CD8-positive, alpha-beta T cell (primary cell): ENCODE measurements at regions of chr18 and their contacts with region 1.

Region 1: GRCh38 chr18:23131693-23132319 is 3.5 kb upstream of the CABLES1 start:
- DNase-seq: peak in 8 of 9 experiments; percentile 47 to 84 (median 62)
- ATAC-seq: peak; percentile 54
- H3K4me3 ChIP-seq: no peak overlapping the region
- H3K4me3 Mint-ChIP-seq: no peak overlapping the region
- H3K27ac ChIP-seq: no peak overlapping the region
- H3K27ac Mint-ChIP-seq: no peak overlapping the region
- H3K4me1 ChIP-seq: peaks cover 11% of the 10 kb centered on the region
- H3K4me1 Mint-ChIP-seq: peaks cover 15% of the 10 kb centered on the region
- H3K27me3 ChIP-seq: peaks cover 16 to 17% of the 10 kb centered on the region in 2 experiments
- H3K27me3 Mint-ChIP-seq: peaks cover 38% of the 10 kb centered on the region
- CTCF ChIP-seq: peak; percentile 90

Region 2: GRCh38 chr18:21557607-21558253 is 1574.1 kb before region 1 on chr18:
- CTCF ChIA-PET with region 1: no interaction called
- POLR2A ChIA-PET with region 1: no interaction called
- intact Hi-C with region 1: no loop called
- DNase-seq: no peak
- ATAC-seq: no peak
- H3K4me3 ChIP-seq: no peak overlapping the region
- H3K4me3 Mint-ChIP-seq: no peak overlapping the region
- H3K27ac ChIP-seq: no peak overlapping the region
- H3K27ac Mint-ChIP-seq: no peak overlapping the region
- H3K4me1 ChIP-seq: no peaks in the 10 kb centered on the region
- H3K4me1 Mint-ChIP-seq: no peaks in the 10 kb centered on the region
- H3K27me3 ChIP-seq: no peaks in the 10 kb centered on the region
- H3K27me3 Mint-ChIP-seq: no peaks in the 10 kb centered on the region
- CTCF ChIP-seq: no peak

Region 3: DNA sequence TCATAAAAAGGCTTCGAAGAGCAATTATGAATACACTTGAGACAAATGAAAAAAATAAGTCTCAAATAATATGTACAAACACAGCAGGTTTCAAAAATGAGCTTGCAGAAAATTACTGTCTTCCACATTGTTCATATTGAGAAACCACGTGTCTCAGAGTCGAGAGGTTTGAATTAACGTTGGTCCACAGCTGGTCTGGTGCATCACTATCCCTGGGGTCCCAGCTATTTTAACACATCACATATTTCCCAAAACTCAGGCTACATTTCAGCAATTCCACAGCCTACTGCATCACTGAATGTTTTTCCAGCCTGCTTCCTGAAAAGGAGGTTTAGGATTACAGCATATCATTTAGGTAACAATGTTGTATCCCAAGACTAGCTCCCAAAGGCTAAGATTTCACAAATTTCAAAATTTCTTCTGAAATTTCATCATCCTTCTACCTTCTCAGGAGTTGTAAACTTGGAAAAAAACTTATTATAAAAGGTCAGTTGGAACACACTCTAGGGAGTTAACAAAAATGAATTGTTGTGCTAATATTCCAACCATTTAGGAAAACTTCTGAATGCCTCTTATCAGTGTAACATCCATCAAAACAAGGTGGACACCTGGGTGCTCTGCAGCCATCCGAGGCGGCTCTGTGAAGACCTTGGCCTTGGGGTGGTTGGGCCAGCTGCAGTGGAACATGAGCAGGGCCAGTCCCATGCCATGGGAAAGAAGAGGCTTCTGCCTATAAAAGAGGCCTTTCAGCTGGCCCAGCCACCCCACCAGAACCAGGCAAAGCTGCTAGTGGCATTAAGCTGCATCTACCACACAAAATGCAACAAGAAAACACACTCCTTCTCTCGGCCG is 396.8 kb before region 1 on chr18:
- CTCF ChIA-PET with region 1: no interaction called
- POLR2A ChIA-PET with region 1: no interaction called
- intact Hi-C with region 1: no loop called
- DNase-seq: no peak
- ATAC-seq: no peak
- H3K4me3 ChIP-seq: no peak overlapping the region
- H3K4me3 Mint-ChIP-seq: no peak overlapping the region
- H3K27ac ChIP-seq: no peak overlapping the region
- H3K27ac Mint-ChIP-seq: no peak overlapping the region
- H3K4me1 ChIP-seq: no peaks in the 10 kb centered on the region
- H3K4me1 Mint-ChIP-seq: no peaks in the 10 kb centered on the region
- H3K27me3 ChIP-seq: no peaks in the 10 kb centered on the region
- H3K27me3 Mint-ChIP-seq: peaks cover 3% of the 10 kb centered on the region
- CTCF ChIP-seq: no peak

Region 4: DNA sequence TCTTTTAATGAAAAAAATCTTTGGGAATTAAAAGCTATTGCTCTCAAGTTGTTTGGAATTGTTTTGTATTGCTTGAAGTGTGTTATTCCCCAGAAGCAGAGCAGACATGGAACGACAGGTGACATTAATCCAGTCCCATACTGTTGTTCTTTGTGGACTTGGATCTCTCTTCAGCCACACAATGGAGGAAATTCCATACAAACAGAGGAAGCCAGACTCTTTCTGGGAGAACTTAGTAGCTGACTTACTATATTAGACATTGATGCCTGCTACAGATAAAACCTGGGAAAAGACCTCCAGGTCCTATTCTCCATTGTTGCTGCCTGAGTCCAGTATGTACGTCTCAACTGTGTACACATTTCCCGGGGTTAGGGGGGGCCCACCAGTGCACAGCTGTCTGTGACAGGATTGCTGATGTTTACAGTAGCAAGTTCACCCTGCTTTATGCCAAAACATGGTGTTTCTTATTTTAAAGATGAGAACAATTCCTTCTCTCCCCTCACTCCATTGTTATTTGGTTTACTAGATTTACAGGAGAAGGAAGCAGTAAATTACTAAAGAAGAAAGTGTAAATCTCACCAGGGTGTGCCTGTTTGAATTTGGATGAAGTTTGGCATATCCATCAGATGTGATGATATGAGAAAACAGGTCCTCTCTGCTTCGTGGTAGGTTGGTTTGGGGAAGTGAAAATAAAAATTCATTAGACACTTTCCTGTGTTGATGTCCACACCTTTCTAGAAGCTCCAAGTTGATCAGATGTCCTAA is 341.1 kb before region 1 on chr18:
- CTCF ChIA-PET with region 1: no interaction called
- POLR2A ChIA-PET with region 1: no interaction called
- intact Hi-C with region 1: loop called in 1 of 2 experiments (anchors 10 kb)
- DNase-seq: no peak
- ATAC-seq: no peak
- H3K4me3 ChIP-seq: no peak overlapping the region
- H3K4me3 Mint-ChIP-seq: no peak overlapping the region
- H3K27ac ChIP-seq: no peak overlapping the region
- H3K27ac Mint-ChIP-seq: no peak overlapping the region
- H3K4me1 ChIP-seq: no peaks in the 10 kb centered on the region
- H3K4me1 Mint-ChIP-seq: no peaks in the 10 kb centered on the region
- H3K27me3 ChIP-seq: peaks cover 0 to 2% of the 10 kb centered on the region in 2 experiments
- H3K27me3 Mint-ChIP-seq: peaks cover 14% of the 10 kb centered on the region
- CTCF ChIP-seq: no peak

Region 5: DNA sequence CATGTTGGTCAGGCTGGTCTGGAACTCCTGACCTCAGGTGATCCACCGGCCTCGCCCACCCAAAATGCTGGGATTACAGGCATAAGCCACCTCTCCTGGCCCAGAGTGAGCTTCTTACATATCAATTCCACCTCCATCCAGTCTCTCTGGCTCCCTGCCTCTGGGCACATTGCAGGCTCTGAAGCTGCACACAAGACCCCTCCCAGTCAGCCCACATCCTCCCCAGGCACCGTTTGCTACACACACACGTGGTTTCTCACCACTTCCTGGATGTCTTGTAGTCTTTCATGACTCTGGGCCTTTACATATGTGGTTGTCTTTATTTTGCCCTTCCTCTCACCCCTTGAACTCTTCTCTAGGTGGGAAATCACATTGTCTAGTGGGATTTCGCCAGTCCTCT is 60.5 kb before region 1 on chr18:
- CTCF ChIA-PET with region 1: interaction called, 3 read pairs
- POLR2A ChIA-PET with region 1: no interaction called
- intact Hi-C with region 1: loop called (anchors 2 to 5 kb)
- DNase-seq: peak; percentile 63 to 95 (median 86)
- ATAC-seq: peak; percentile 92
- H3K4me3 ChIP-seq: peak overlapping the region in 1 of 2 experiments; percentile 8
- H3K4me3 Mint-ChIP-seq: peak overlapping the region; percentile 71
- H3K27ac ChIP-seq: peak overlapping the region in 1 of 2 experiments; percentile 37
- H3K27ac Mint-ChIP-seq: peak overlapping the region; percentile 85
- H3K4me1 ChIP-seq: peaks cover 52% of the 10 kb centered on the region
- H3K4me1 Mint-ChIP-seq: peaks cover 66% of the 10 kb centered on the region
- H3K27me3 ChIP-seq: no peaks in the 10 kb centered on the region
- H3K27me3 Mint-ChIP-seq: no peaks in the 10 kb centered on the region
- CTCF ChIP-seq: no peak

Region 6: GRCh38 chr18:23356915-23357601 is 225.3 kb after region 1 on chr18:
- CTCF ChIA-PET with region 1: interaction called, 28 read pairs
- POLR2A ChIA-PET with region 1: no interaction called
- intact Hi-C with region 1: loop called (anchors 1 kb)
- DNase-seq: no peak
- ATAC-seq: no peak
- H3K4me3 ChIP-seq: no peak overlapping the region
- H3K4me3 Mint-ChIP-seq: no peak overlapping the region
- H3K27ac ChIP-seq: no peak overlapping the region
- H3K27ac Mint-ChIP-seq: no peak overlapping the region
- H3K4me1 ChIP-seq: peaks cover 5% of the 10 kb centered on the region
- H3K4me1 Mint-ChIP-seq: peaks cover 17% of the 10 kb centered on the region
- H3K27me3 ChIP-seq: no peaks in the 10 kb centered on the region
- H3K27me3 Mint-ChIP-seq: no peaks in the 10 kb centered on the region
- CTCF ChIP-seq: no peak

Region 7: DNA sequence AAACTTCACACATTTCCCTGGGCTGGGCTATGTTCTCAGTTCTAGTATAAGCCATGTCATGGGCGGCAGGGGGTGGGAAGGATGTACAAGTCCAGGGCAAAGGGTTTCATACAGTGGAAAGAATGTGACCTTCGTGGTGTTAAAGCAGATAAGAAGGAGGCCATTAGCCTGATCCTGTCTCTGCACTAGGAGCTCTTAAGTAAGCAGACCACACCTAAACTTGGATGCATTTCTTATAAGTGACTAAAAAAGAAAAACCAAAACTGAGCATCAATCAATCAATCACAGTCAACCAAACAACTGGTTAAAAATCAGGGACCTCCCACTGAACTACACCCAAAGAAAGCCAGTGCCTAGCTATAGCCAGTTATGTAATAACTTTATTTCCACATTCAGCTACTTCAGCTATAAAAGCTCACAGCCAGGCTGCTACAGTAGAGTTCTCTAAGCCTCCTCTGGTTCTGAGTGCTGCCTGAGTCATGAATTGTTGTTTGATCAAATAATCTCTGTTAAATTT is 274.5 kb after region 1 on chr18:
- CTCF ChIA-PET with region 1: interaction called, 33 read pairs
- POLR2A ChIA-PET with region 1: no interaction called
- intact Hi-C with region 1: loop called (anchors 1 kb)
- DNase-seq: no peak
- ATAC-seq: no peak
- H3K4me3 ChIP-seq: no peak overlapping the region
- H3K4me3 Mint-ChIP-seq: no peak overlapping the region
- H3K27ac ChIP-seq: no peak overlapping the region
- H3K27ac Mint-ChIP-seq: no peak overlapping the region
- H3K4me1 ChIP-seq: no peaks in the 10 kb centered on the region
- H3K4me1 Mint-ChIP-seq: no peaks in the 10 kb centered on the region
- H3K27me3 ChIP-seq: no peaks in the 10 kb centered on the region
- H3K27me3 Mint-ChIP-seq: no peaks in the 10 kb centered on the region
- CTCF ChIP-seq: no peak

Region 8: GRCh38 chr18:23812546-23813440 is 681.0 kb after region 1 on chr18:
- CTCF ChIA-PET with region 1: no interaction called
- POLR2A ChIA-PET with region 1: no interaction called
- intact Hi-C with region 1: loop called in 1 of 2 experiments (anchors 5 kb)
- DNase-seq: peak in 2 of 9 experiments; percentile 45 to 59
- ATAC-seq: no peak
- H3K4me3 ChIP-seq: no peak overlapping the region
- H3K4me3 Mint-ChIP-seq: no peak overlapping the region
- H3K27ac ChIP-seq: no peak overlapping the region
- H3K27ac Mint-ChIP-seq: no peak overlapping the region
- H3K4me1 ChIP-seq: peaks cover 19% of the 10 kb centered on the region
- H3K4me1 Mint-ChIP-seq: peaks cover 30% of the 10 kb centered on the region
- H3K27me3 ChIP-seq: no peaks in the 10 kb centered on the region
- H3K27me3 Mint-ChIP-seq: no peaks in the 10 kb centered on the region
- CTCF ChIP-seq: peak; percentile 67